ENCODE measurements at regions of chr9 and their contacts with region 1.

Region 1: GRCh38 chr9:108412755-108413154 is 443.0 kb downstream of the ACTL7B start:
- DNase-seq: no peak

Region 2: DNA sequence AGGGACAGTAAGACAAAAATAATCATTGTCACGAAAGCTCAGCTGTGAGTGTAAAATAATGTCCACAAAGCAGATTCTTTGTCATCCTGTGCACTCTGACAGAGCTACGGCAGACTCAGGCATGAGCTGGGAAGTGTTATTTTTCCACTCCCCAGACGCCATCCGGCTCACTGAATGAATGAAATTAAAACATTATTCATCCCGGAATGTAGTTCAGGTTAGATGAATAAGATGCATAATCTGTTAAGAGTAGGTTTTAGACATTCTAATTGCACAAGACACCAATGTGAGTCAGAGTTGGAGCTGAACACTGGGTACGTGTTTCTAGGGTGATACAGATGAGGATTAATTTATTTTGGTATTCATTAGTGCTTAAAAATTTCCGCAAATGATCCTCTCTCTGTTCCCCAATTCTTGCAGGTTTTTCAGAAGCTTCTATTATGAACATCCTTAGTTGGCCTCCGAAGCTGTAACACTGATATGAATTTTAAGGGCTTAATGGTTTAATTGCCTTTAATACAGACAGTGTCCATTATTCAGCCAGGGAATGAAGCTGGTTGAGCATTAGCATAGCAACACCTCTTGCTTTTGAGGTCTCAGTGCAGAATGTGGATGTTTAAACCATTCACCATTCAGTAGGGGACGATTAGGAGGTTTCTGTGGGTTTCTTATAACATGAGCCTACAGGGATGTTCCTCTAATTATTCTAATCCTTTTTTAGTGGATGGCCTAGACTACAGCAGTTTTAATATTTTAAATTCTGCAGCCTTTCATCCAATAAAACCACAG is 819.9 kb after region 1 on chr9:
- intact Hi-C with region 1: loop called in 1 of 2 experiments (anchors 5 kb)
- DNase-seq: no peak

Measured in posterior vena cava (tissue), 2 donors.